ENCODE measurements at regions of chr3 and their contacts with region 1.

Region 1: DNA sequence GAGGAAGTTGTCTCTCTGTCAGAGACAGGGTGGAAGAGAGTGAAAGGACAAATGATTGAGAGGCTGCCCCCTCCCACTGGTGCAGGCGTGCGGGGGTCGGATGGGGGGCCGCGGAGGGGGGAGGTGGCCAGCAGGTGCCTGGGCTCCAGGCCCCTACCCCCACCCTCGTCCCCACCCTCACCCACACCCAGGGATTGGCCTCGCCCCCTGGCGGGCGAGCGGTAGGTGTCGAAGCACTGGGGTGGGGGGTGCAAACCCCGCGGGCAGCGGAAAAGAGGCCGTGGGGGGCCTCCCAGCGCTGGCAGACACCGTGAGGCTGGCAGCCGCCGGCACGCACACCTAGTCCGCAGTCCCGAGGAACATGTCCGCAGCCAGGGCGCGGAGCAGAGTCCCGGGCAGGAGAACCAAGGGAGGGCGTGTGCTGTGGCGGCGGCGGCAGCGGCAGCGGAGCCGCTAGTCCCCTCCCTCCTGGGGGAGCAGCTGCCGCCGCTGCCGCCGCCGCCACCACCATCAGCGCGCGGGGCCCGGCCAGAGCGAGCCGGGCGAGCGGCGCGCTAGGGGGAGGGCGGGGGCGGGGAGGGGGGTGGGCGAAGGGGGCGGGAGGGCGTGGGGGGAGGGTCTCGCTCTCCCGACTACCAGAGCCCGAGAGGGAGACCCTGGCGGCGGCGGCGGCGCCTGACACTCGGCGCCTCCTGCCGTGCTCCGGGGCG is at the start of gene KAT2B:
- DNase-seq: peak; percentile 70 to 94 (median 84)
- ATAC-seq: peak; percentile 72
- H3K4me3 ChIP-seq: peak within 1 kb of the TSS; percentile 82 to 91
- H3K4me3 Mint-ChIP-seq: peak within 1 kb of the TSS; percentile 98
- H3K27ac ChIP-seq: peak within 1 kb of the TSS; percentile 72 to 88
- H3K27ac Mint-ChIP-seq: peak within 1 kb of the TSS; percentile 98
- H3K4me1 ChIP-seq: peaks cover 45% of the 10 kb centered on the region
- H3K4me1 Mint-ChIP-seq: peaks cover 53% of the 10 kb centered on the region
- H3K27me3 ChIP-seq: no peaks in the 10 kb centered on the region
- H3K27me3 Mint-ChIP-seq: no peaks in the 10 kb centered on the region
- CTCF ChIP-seq: peak; percentile 95
- total RNA-seq, gene KAT2B: 37.5 to 37.9 TPM

Region 2: GRCh38 chr3:19146685-19147650 is 893.0 kb before region 1 on chr3:
- CTCF ChIA-PET with region 1: no interaction called
- POLR2A ChIA-PET with region 1: no interaction called
- intact Hi-C with region 1: loop called in 1 of 2 experiments (anchors 5 kb)
- DNase-seq: peak; percentile 33 to 87 (median 68)
- ATAC-seq: peak; percentile 72
- H3K4me3 ChIP-seq: peak overlapping the region; percentile 70 to 75
- H3K4me3 Mint-ChIP-seq: peak overlapping the region; percentile 93
- H3K27ac ChIP-seq: peak overlapping the region; percentile 40 to 47
- H3K27ac Mint-ChIP-seq: peak overlapping the region; percentile 88
- H3K4me1 ChIP-seq: peaks cover 21% of the 10 kb centered on the region
- H3K4me1 Mint-ChIP-seq: peaks cover 14% of the 10 kb centered on the region
- H3K27me3 ChIP-seq: peaks cover 0 to 4% of the 10 kb centered on the region in 2 experiments
- H3K27me3 Mint-ChIP-seq: peaks cover 21% of the 10 kb centered on the region
- CTCF ChIP-seq: peak; percentile 54

Region 3: DNA sequence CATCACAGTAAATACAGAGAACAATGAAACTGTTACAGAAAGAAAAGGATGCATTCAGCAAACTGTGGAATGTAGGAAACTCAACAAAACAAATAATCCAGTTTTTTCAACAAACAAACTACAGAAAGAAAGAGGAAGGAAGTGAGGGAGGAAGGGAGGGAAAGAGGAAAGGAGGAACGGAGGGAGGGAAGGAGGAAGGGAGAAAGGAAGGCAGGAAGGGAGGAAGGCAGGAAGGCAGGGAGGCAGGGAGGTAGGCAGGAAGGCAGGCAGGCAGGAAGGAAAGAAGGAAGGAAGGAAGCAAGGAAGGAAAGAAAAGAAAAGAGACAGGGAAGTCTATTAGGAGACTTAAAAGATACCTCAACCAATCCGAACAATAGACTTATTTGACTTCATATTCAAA is 241.6 kb before region 1 on chr3:
- CTCF ChIA-PET with region 1: no interaction called
- POLR2A ChIA-PET with region 1: no interaction called
- intact Hi-C with region 1: no loop called
- DNase-seq: no peak
- ATAC-seq: no peak
- H3K4me3 ChIP-seq: no peak overlapping the region
- H3K4me3 Mint-ChIP-seq: no peak overlapping the region
- H3K27ac ChIP-seq: no peak overlapping the region
- H3K27ac Mint-ChIP-seq: no peak overlapping the region
- H3K4me1 ChIP-seq: no peaks in the 10 kb centered on the region
- H3K4me1 Mint-ChIP-seq: no peaks in the 10 kb centered on the region
- H3K27me3 ChIP-seq: no peaks in the 10 kb centered on the region
- H3K27me3 Mint-ChIP-seq: no peaks in the 10 kb centered on the region
- CTCF ChIP-seq: no peak

Region 4: GRCh38 chr3:19946832-19947548 is 92.9 kb before region 1 on chr3 and contains the start of gene RAB5A:
- CTCF ChIA-PET with region 1: no interaction called
- POLR2A ChIA-PET with region 1: interaction called, 14 read pairs
- intact Hi-C with region 1: loop called (anchors 1 kb)
- DNase-seq: peak; percentile 91 to 99 (median 97)
- ATAC-seq: peak; percentile 74
- H3K4me3 ChIP-seq: peak within 1 kb of the TSS; percentile 95 to 99
- H3K4me3 Mint-ChIP-seq: peak within 1 kb of the TSS; percentile 100
- H3K27ac ChIP-seq: peak within 1 kb of the TSS; percentile 75 to 99
- H3K27ac Mint-ChIP-seq: peak within 1 kb of the TSS; percentile 100
- H3K4me1 ChIP-seq: peaks cover 33% of the 10 kb centered on the region
- H3K4me1 Mint-ChIP-seq: peaks cover 53% of the 10 kb centered on the region
- H3K27me3 ChIP-seq: no peaks in the 10 kb centered on the region
- H3K27me3 Mint-ChIP-seq: no peaks in the 10 kb centered on the region
- CTCF ChIP-seq: no peak
- total RNA-seq, gene RAB5A: 120 to 121 TPM

Region 5: GRCh38 chr3:20013396-20013795 is 26.5 kb before region 1 on chr3:
- CTCF ChIA-PET with region 1: no interaction called
- POLR2A ChIA-PET with region 1: no interaction called
- intact Hi-C with region 1: no loop called
- DNase-seq: no peak
- ATAC-seq: no peak
- H3K4me3 ChIP-seq: no peak overlapping the region
- H3K4me3 Mint-ChIP-seq: no peak overlapping the region
- H3K27ac ChIP-seq: no peak overlapping the region
- H3K27ac Mint-ChIP-seq: no peak overlapping the region
- H3K4me1 ChIP-seq: no peaks in the 10 kb centered on the region
- H3K4me1 Mint-ChIP-seq: no peaks in the 10 kb centered on the region
- H3K27me3 ChIP-seq: no peaks in the 10 kb centered on the region
- H3K27me3 Mint-ChIP-seq: no peaks in the 10 kb centered on the region
- CTCF ChIP-seq: no peak

Region 6: DNA sequence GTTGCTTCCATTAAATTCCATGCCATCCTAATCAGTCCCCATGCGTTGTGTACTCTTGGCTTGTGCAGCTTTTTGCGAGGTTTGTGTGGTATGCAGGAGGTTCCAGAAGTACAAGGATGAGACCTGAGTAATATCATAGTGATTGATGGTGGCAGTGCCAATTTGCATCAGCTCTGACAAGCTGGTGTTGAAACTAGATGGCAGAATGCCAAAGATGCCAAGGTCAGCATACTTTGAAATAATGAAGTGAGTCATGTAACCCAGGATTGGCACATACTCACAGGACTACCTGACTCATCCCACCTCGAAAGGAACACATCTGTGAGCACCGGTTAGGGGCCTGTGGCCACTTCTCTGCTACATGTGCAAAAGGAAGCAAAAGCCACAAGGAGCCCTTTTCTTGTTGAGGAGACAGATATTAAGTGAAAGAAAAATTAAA is 14.6 kb after region 1 on chr3:
- CTCF ChIA-PET with region 1: interaction called, 3 read pairs
- POLR2A ChIA-PET with region 1: interaction called, 3 read pairs
- intact Hi-C with region 1: loop called in 1 of 2 experiments (anchors 2 kb)
- DNase-seq: peak; percentile 16 to 88 (median 66)
- ATAC-seq: peak; percentile 88
- H3K4me3 ChIP-seq: no peak overlapping the region
- H3K4me3 Mint-ChIP-seq: no peak overlapping the region
- H3K27ac ChIP-seq: peak overlapping the region in 1 of 2 experiments; percentile 56
- H3K27ac Mint-ChIP-seq: no peak overlapping the region
- H3K4me1 ChIP-seq: peaks cover 37% of the 10 kb centered on the region
- H3K4me1 Mint-ChIP-seq: peaks cover 32% of the 10 kb centered on the region
- H3K27me3 ChIP-seq: no peaks in the 10 kb centered on the region
- H3K27me3 Mint-ChIP-seq: no peaks in the 10 kb centered on the region
- CTCF ChIP-seq: no peak

Region 7: DNA sequence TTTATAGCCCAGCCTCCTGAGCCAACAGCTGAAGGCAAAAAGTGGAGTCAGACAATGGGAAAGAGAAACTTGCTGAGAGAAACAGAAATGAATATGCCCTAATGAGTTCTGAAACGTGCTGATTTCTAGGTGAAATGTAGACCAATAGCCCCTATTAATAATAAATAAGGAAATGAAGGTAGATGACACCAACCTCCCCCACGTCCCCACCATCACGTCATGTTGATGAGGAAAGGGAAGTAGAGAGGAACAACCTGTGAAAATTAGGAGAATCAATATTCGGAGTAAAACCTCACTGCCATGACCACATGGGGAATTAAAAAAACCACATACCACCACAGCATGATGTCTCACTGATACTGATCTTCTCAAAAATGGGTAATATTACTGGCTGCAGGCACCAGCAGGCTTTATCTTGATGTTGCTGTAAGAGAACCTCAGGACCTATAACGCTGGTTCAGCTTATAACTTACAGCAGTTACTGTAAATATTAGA is 64.3 kb after region 1 on chr3:
- CTCF ChIA-PET with region 1: no interaction called
- POLR2A ChIA-PET with region 1: no interaction called
- intact Hi-C with region 1: loop called in 1 of 2 experiments (anchors 5 kb)
- DNase-seq: peak in 6 of 9 experiments; percentile 9 to 87 (median 28)
- ATAC-seq: peak; percentile 75
- H3K4me3 ChIP-seq: no peak overlapping the region
- H3K4me3 Mint-ChIP-seq: peak overlapping the region; percentile 37
- H3K27ac ChIP-seq: peak overlapping the region in 1 of 2 experiments; percentile 77
- H3K27ac Mint-ChIP-seq: peak overlapping the region; percentile 24
- H3K4me1 ChIP-seq: peaks cover 30% of the 10 kb centered on the region
- H3K4me1 Mint-ChIP-seq: peaks cover 42% of the 10 kb centered on the region
- H3K27me3 ChIP-seq: no peaks in the 10 kb centered on the region
- H3K27me3 Mint-ChIP-seq: no peaks in the 10 kb centered on the region
- CTCF ChIP-seq: no peak

Measured in CD8-positive, alpha-beta T cell (primary cell).